ENCODE measurements at regions of chr1 and their contacts with region 1.

Region 1: DNA sequence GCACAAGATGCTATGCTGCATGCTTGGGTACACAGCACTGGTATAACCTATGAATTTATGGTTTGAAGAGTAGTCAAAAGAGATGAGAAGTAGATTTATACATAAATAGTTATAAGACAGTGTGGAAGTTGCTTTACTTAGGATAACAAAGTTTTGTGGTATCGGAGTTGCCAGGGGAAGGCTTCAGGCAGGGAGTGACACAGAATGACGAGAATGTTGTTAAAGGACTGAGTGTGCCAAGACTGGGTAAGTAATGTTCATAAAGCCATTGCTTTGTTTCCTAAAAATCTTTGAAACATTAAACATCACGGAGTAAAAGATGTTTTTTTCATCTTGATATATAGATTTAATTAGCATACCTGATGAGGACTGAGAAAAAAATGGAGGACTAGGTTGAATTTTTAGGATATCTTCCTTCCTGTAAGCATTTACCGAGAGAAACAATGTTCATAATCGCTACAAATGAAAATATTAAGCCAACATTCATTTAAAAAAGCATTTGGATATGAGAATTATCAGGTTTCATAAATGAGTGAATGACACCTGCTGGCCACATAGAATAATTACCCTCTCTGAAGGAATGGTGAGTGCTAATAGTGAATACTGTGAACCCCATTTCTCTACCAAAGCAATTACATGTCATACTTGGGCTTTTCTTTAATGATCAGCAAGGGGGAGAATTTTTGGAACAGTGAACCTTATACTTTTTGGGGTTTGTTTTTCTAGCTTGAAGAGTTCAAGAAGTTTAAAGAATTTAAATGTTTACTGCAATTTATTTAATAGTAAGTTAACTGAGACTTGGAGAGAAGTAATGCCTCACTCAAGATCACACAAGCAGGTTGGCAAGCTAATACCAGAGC is 28.4 kb downstream of the EXTL2 start:
- DNase-seq: no peak
- ATAC-seq: peak; percentile 42 to 61
- H3K4me3 ChIP-seq: no peak overlapping the region
- H3K27ac ChIP-seq: no peak overlapping the region
- H3K4me1 ChIP-seq: peaks cover 10% of the 10 kb centered on the region
- H3K27me3 ChIP-seq: no peaks in the 10 kb centered on the region
- CTCF ChIP-seq: peak; percentile 65

Region 2: DNA sequence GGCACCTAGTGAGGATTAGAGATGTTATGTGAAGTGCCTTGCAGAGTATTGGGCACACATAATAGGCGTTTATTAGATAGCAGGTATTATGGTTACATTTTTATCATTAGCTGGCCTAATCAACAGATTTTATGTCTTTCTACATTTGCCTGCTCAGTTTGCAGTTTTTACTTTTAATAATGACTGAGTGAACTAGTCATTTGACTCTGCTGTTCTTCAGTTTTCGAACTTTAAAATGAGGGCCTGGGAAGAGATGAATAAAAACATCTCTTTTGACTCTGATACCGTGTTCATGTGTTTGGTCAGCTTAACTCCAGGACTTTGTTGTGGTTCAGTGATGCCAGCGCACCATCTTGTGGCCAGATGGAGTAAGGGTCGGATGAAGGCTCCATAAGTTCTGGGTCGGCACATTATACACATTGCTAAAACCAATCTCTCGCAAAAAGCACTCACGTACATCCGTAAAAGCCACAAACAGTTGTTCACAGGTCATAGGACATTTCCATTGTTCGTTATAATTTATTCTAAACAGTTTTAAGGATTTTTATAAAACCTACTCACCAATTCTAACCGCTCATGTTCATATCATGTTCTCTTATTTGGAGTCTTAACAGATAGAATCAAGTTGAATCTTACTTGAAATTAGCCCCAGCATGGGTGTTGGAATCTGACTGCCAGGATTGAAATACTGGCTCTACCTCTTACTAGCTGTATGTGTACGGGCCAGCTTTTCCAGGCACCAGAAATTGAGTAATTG is 406.7 kb before region 1 on chr1:
- intact Hi-C with region 1: loop called (anchors 5 kb)
- DNase-seq: peak; percentile 69
- ATAC-seq: peak; percentile 91 to 93
- H3K4me3 ChIP-seq: no peak overlapping the region
- H3K27ac ChIP-seq: no peak overlapping the region
- H3K4me1 ChIP-seq: peaks cover 15% of the 10 kb centered on the region
- H3K27me3 ChIP-seq: no peaks in the 10 kb centered on the region
- CTCF ChIP-seq: peak; percentile 91

Region 3: DNA sequence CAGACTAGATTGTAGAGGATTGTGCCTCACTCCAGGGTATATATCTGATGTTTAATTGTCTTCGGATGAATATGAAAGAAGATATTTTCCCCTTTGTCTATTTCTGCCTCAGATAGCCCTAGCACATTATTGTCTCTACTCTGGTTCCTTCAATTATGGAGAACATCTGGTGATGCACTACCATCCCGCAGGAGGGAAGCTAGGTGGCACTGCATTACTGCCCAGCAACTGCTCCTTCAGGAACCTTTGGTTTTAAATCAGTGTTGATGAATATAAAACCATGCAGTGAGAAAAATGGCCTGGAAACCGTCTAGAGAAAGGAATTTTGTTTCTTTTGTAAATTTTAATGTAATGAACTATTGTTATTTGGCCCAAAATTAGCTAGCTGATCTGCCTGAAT is 259.8 kb before region 1 on chr1:
- intact Hi-C with region 1: loop called (anchors 5 kb)
- DNase-seq: no peak
- ATAC-seq: peak; percentile 76
- H3K4me3 ChIP-seq: no peak overlapping the region
- H3K27ac ChIP-seq: no peak overlapping the region
- H3K4me1 ChIP-seq: no peaks in the 10 kb centered on the region
- H3K27me3 ChIP-seq: no peaks in the 10 kb centered on the region
- CTCF ChIP-seq: peak; percentile 62